ENCODE measurements at regions of chr1 and their contacts with region 1.

Region 1: GRCh38 chr1:230335861-230336522 is 90.1 kb downstream of the PGBD5 start:
- DNase-seq: no peak
- ATAC-seq: peak in 3 of 8 donors; percentile 31 to 65 (median 41)
- H3K4me3 ChIP-seq: no peak overlapping the region
- H3K27ac ChIP-seq: no peak overlapping the region
- H3K4me1 ChIP-seq: peaks cover 0 to 18% (median 8%) of the 10 kb centered on the region in 9 donors
- H3K27me3 ChIP-seq: no peaks in the 10 kb centered on the region
- CTCF ChIP-seq: no peak

Region 2: GRCh38 chr1:229127301-229127700 is 1208.7 kb before region 1 on chr1:
- intact Hi-C with region 1: loop called in 1 of 10 experiments (anchors 5 kb)
- DNase-seq: no peak
- ATAC-seq: no peak
- H3K4me3 ChIP-seq: no peak overlapping the region
- H3K27ac ChIP-seq: no peak overlapping the region
- H3K4me1 ChIP-seq: peaks cover 0 to 38% (median 0%) of the 10 kb centered on the region in 9 donors
- H3K27me3 ChIP-seq: peaks cover 0 to 28% (median 6%) of the 10 kb centered on the region in 7 donors
- CTCF ChIP-seq: no peak

Region 3: GRCh38 chr1:230251644-230252191 is 84.3 kb before region 1 on chr1:
- intact Hi-C with region 1: no loop called
- DNase-seq: no peak
- ATAC-seq: no peak
- H3K4me3 ChIP-seq: no peak overlapping the region
- H3K27ac ChIP-seq: no peak overlapping the region
- H3K4me1 ChIP-seq: peaks cover 0 to 6% (median 0%) of the 10 kb centered on the region in 9 donors
- H3K27me3 ChIP-seq: no peaks in the 10 kb centered on the region
- CTCF ChIP-seq: no peak